SK-N-SH (cell line): ENCODE measurements at regions of chr19 and their contacts with region 1.

Region 1: DNA sequence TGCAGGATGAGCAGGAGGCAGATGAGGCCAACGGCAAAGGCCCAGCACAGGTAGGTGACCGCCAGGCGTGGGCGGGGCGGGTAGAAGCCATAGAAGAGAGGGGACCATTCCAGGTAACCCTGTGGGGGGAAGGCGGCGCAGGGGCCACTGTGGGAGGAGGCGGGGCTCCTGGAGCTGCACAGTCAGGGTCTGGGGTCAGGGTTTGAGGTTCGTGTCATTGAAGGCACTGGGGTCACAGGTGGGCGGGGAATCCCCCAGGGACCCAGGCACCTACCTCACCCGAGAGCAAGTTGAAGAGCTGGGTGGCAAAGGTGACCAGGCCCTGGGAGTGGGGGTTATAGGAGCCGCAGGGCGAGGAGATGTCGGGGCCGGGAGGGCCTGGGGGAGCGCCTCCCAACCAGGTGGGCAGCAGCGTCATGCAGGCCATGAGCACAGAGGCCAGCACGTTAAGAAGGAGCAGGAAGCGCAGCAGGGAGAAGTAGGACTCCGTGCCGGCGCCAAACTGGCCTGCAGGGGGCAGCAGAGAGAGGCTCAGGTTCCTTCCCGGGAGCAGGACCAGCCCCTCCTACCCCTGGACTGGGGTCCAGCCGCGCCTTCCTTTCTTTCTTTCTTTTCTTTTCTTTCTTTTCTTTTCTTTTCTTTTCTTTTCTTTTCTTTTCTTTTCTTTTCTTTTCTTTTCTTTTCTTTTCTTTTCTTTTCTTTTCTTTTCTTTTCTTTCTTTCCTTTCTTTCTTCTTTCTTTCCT is 4.6 kb downstream of the TMC4 start:
- DNase-seq: peak; percentile 97
- H3K4me3 ChIP-seq: peak overlapping the region in 1 of 2 experiments; percentile 51; a peak in 1 of 4 replicates
- H3K27ac ChIP-seq: no peak overlapping the region
- H3K4me1 ChIP-seq: peaks cover 5 to 6% of the 10 kb centered on the region in 2 experiments; a peak in 2 of 4 replicates
- H3K27me3 ChIP-seq: no peaks in the 10 kb centered on the region
- CTCF ChIP-seq: peak; percentile 82
- EP300 ChIP-seq: no peak
- RAD21 ChIP-seq: peak; percentile 73

Region 2: DNA sequence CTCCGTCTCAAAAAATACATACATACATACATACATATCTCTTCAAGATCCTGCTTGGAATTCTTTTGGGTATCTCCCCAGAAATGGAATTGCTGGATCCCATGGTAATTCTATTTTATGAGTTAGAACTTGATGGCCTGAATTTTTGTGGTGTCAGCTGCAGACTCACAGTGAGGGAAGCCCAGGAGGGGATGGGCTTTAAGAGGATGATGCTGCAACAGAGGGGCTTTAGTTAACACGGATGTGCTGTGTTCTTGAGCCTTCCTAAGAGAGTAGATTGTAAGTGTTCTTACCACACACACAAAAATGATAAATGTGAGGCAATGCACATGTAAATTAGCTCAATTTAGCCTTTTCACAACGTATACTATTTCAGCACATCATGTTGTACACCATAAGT is 145.2 kb before region 1 on chr19:
- CTCF ChIA-PET with region 1: no interaction called
- POLR2A ChIA-PET with region 1: no interaction called
- DNase-seq: no peak
- H3K4me3 ChIP-seq: no peak overlapping the region
- H3K27ac ChIP-seq: no peak overlapping the region
- H3K4me1 ChIP-seq: peaks cover 0 to 8% of the 10 kb centered on the region in 2 experiments; a peak in 1 of 4 replicates
- H3K27me3 ChIP-seq: no peaks in the 10 kb centered on the region
- CTCF ChIP-seq: no peak
- EP300 ChIP-seq: no peak
- RAD21 ChIP-seq: no peak

Region 3: GRCh38 chr19:54179921-54180461 is 11.6 kb after region 1 on chr19:
- CTCF ChIA-PET with region 1: interaction called, 12 read pairs
- POLR2A ChIA-PET with region 1: no interaction called
- DNase-seq: peak; percentile 66
- H3K4me3 ChIP-seq: peak overlapping the region in 1 of 2 experiments; percentile 49; a peak in 1 of 4 replicates
- H3K27ac ChIP-seq: no peak overlapping the region
- H3K4me1 ChIP-seq: peaks cover 0 to 9% of the 10 kb centered on the region in 2 experiments; a peak in 1 of 4 replicates
- H3K27me3 ChIP-seq: no peaks in the 10 kb centered on the region
- CTCF ChIP-seq: peak; percentile 34; the same call in 1 of the 2 replicates
- EP300 ChIP-seq: no peak
- RAD21 ChIP-seq: peak; percentile 32; the same call in 1 of the 2 replicates

Region 4: GRCh38 chr19:54266133-54266532 is 97.8 kb after region 1 on chr19:
- CTCF ChIA-PET with region 1: interaction called, 13 read pairs
- POLR2A ChIA-PET with region 1: no interaction called
- DNase-seq: peak; percentile 59
- H3K4me3 ChIP-seq: no peak overlapping the region; a peak in 1 of 4 replicates
- H3K27ac ChIP-seq: no peak overlapping the region
- H3K4me1 ChIP-seq: no peaks in the 10 kb centered on the region
- H3K27me3 ChIP-seq: peaks cover 44% of the 10 kb centered on the region; the same call in 1 of the 2 replicates
- CTCF ChIP-seq: peak; percentile 76
- EP300 ChIP-seq: no peak
- RAD21 ChIP-seq: peak; percentile 44